IMR-90 (cell line): ENCODE measurements at regions of chr14 and their contacts with region 1.

Region 1: DNA sequence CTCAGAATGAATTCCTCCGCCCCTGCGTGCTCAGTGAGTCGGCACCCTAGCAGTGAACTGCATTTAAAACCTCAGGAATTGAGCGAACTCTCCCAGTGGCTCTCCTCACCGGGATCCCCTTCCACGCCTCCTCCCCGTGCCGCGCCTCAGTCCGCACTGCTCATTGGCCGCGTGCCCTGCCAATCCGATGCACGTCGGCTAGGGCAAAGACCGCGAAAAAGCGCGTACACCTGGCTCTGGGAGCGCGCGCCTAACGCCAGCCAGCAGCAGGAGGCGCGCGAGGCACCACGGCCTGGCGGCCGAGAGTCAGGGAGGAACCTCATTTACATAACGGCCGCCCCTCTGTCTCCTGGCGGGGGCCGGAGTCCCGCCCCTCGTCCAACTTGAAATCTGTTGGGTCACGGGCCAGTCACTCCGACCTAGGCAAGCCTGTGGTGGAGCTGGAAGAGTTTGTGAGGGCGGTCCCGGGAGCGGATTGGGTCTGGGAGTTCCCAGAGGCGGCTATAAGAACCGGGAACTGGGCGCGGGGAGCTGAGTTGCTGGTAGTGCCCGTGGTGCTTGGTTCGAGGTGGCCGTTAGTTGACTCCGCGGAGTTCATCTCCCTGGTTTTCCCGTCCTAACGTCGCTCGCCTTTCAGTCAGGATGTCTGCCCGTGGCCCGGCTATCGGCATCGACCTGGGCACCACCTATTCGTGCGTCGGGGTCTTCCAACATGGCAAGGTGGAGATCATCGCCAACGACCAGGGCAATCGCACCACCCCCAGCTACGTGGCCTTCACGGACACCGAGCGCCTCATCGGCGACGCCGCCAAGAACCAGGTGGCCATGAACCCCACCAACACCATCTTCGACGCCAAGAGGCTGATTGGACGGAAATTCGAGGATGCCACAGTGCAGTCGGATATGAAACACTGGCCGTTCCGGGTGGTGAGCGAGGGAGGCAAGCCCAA is at the start of gene HSPA2:
- DNase-seq: peak; percentile 99
- ATAC-seq: peak; percentile 95
- H3K4me3 ChIP-seq: peak within 1 kb of the TSS; percentile 67
- H3K27ac ChIP-seq: peak within 1 kb of the TSS; percentile 40
- H3K4me1 ChIP-seq: no peaks in the 10 kb centered on the region; the same call in 1 of the 2 replicates
- H3K27me3 ChIP-seq: no peaks in the 10 kb centered on the region
- CTCF ChIP-seq: peak; percentile 97
- POLR2A ChIP-seq: peak; percentile 98
- RAD21 ChIP-seq: peak; percentile 78
- total RNA-seq, gene HSPA2: 18.9 and 19.7 TPM in 2 replicates

Region 2: DNA sequence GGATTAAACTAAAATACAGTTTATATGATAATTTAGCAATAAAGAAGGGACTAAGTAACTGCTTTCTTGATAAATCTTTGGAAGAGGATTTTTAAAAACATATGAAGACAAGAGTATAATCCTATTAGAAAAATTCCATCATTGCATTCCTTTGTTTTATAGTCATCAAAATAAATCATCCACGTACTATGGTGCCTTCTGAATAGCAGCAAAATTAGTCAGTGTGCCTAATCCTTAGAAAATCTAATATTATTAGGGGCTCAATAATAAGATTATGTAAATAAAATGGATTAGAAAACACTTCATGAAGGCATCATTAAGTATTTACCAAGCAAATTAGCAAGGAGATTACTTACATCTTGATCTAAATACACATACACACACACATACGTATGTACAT is 1597.3 kb before region 1 on chr14:
- CTCF ChIA-PET with region 1: no interaction called
- POLR2A ChIA-PET with region 1: no interaction called
- dilution Hi-C with region 1: no loop called
- in situ Hi-C with region 1: no loop called
- intact Hi-C with region 1: no loop called
- DNase-seq: peak; percentile 49
- ATAC-seq: peak; percentile 77
- H3K4me3 ChIP-seq: no peak overlapping the region
- H3K27ac ChIP-seq: no peak overlapping the region
- H3K4me1 ChIP-seq: no peaks in the 10 kb centered on the region
- H3K27me3 ChIP-seq: no peaks in the 10 kb centered on the region
- CTCF ChIP-seq: no peak
- POLR2A ChIP-seq: no peak
- RAD21 ChIP-seq: no peak

Region 3: GRCh38 chr14:64612021-64612380 is 71.5 kb after region 1 on chr14:
- CTCF ChIA-PET with region 1: interaction called, 3 read pairs
- POLR2A ChIA-PET with region 1: no interaction called
- dilution Hi-C with region 1: no loop called
- in situ Hi-C with region 1: no loop called
- intact Hi-C with region 1: loop called (anchors 5 kb)
- DNase-seq: peak; percentile 85
- ATAC-seq: peak; percentile 90
- H3K4me3 ChIP-seq: no peak overlapping the region
- H3K27ac ChIP-seq: peak overlapping the region; percentile 98; the same call in 1 of the 2 replicates
- H3K4me1 ChIP-seq: peaks cover 24% of the 10 kb centered on the region
- H3K27me3 ChIP-seq: no peaks in the 10 kb centered on the region
- CTCF ChIP-seq: no peak
- POLR2A ChIP-seq: no peak
- RAD21 ChIP-seq: no peak

Region 4: DNA sequence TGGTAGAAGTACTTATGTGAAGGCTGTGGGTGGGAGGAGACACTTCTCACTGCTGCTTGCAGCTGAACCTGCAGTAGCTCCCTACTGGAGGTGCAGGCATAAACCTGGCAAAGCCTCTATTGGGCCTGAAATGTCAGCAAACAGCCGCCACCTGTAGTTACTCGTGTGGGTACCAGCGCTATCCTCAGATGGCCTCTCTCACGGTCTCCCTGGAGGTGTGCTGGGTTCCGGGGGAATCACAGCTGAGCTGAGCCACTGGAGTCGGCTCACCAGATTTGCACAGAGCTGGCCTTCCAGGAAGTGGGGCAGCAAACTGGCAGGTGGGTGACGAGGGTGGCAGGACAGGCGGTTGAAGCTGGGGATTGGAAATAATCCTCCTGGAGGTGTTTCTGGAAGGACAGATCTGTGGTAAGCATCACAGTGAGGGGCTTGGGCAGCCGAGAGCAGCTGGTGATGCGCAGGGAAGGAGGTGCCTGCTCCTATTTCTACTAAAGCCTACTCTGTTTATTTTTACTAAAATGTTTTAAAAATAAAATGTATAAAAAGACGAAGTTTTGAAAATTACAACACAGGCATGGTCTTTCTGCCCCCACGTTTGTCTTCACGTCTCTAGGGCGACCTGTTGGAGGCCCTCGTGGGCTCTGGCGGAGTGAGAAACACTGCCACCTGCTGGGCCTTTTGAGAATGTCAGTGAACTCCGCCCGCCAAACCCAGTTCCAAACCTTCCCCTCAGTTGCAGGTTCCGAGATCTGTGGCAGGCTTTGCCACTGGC is 95.9 kb after region 1 on chr14:
- CTCF ChIA-PET with region 1: interaction called, 13 read pairs
- POLR2A ChIA-PET with region 1: no interaction called
- dilution Hi-C with region 1: no loop called
- in situ Hi-C with region 1: loop called (anchors 5 kb)
- intact Hi-C with region 1: loop called (anchors 1 kb)
- DNase-seq: peak; percentile 67
- ATAC-seq: peak; percentile 89
- H3K4me3 ChIP-seq: no peak overlapping the region
- H3K27ac ChIP-seq: peak overlapping the region; percentile 48
- H3K4me1 ChIP-seq: peaks cover 12% of the 10 kb centered on the region
- H3K27me3 ChIP-seq: no peaks in the 10 kb centered on the region
- CTCF ChIP-seq: peak; percentile 86
- POLR2A ChIP-seq: no peak
- RAD21 ChIP-seq: peak; percentile 84

Region 5: DNA sequence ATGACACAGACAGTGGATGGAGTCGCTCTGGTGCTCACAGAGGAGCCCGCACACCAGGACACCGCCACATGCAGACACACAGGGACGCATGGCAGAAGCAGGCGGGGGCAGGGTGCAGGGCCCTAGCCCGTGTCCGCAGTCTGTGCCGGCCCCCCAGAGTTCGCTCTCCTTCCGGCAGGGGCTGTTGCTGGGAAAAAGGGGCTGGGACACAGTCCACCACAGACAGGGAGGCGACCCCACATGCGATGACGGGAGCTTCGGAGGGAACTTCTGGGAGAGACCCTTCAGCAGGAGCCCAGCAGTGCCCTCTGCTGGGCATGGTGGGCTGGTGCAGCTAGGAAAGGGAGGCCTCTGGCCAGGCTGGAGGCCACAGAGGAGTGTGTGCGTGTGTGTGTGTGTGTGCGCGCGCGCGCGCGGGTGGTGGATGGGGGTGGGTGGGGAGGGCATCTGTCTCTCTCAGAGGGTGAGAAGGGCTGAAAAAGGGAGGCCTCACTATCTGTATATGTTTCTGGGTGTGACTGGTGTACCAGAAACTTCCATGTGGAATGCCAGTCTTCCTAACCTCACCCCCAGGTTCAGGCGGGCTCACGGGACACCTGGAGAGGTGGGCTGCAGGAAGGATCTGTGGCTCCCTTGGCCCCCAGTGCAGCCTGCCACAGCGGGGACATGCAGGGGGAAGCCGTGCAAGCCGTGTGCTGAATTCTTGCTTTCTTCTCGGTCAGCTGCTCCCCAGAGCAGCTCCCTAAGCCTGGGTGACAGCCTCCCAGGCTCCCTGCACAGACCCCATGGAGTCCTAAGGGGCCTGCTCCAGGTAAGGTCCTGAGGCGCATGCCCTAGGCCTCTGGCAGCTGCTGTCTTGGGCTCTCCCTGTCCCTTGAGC is 224.4 kb after region 1 on chr14:
- CTCF ChIA-PET with region 1: no interaction called
- POLR2A ChIA-PET with region 1: no interaction called
- dilution Hi-C with region 1: no loop called
- in situ Hi-C with region 1: loop called (anchors 10 kb)
- intact Hi-C with region 1: loop called (anchors 1 kb)
- DNase-seq: peak; percentile 74
- ATAC-seq: peak; percentile 84
- H3K4me3 ChIP-seq: no peak overlapping the region
- H3K27ac ChIP-seq: no peak overlapping the region
- H3K4me1 ChIP-seq: peaks cover 30% of the 10 kb centered on the region
- H3K27me3 ChIP-seq: peaks cover 12% of the 10 kb centered on the region
- CTCF ChIP-seq: peak; percentile 88
- POLR2A ChIP-seq: no peak
- RAD21 ChIP-seq: peak; percentile 89

Region 6: DNA sequence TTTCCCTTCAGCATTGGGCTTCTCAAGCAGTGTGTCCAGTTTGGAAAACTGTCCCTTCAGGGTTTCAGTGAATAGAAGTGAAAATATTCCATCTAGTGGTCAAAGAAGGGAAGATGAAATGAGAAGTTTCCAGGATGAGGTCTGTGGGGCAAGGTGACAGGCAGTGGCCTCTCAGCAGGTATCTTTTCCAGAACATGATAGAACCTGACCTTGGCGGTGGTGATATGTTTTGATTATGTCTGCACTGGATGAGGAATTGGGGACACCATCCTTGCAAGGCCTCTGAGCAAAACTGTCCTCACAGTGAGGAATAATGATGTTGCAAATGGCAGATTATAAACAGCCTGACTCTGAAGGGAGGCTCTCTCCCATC is 397.3 kb after region 1 on chr14:
- CTCF ChIA-PET with region 1: no interaction called
- POLR2A ChIA-PET with region 1: no interaction called
- dilution Hi-C with region 1: no loop called
- in situ Hi-C with region 1: no loop called
- intact Hi-C with region 1: no loop called
- DNase-seq: peak; percentile 15
- ATAC-seq: peak; percentile 67
- H3K4me3 ChIP-seq: no peak overlapping the region
- H3K27ac ChIP-seq: no peak overlapping the region
- H3K4me1 ChIP-seq: no peaks in the 10 kb centered on the region
- H3K27me3 ChIP-seq: no peaks in the 10 kb centered on the region
- CTCF ChIP-seq: peak; percentile 26; the same call in 1 of the 2 replicates
- POLR2A ChIP-seq: no peak
- RAD21 ChIP-seq: peak; percentile 18; the same call in 1 of the 2 replicates

Region 7: DNA sequence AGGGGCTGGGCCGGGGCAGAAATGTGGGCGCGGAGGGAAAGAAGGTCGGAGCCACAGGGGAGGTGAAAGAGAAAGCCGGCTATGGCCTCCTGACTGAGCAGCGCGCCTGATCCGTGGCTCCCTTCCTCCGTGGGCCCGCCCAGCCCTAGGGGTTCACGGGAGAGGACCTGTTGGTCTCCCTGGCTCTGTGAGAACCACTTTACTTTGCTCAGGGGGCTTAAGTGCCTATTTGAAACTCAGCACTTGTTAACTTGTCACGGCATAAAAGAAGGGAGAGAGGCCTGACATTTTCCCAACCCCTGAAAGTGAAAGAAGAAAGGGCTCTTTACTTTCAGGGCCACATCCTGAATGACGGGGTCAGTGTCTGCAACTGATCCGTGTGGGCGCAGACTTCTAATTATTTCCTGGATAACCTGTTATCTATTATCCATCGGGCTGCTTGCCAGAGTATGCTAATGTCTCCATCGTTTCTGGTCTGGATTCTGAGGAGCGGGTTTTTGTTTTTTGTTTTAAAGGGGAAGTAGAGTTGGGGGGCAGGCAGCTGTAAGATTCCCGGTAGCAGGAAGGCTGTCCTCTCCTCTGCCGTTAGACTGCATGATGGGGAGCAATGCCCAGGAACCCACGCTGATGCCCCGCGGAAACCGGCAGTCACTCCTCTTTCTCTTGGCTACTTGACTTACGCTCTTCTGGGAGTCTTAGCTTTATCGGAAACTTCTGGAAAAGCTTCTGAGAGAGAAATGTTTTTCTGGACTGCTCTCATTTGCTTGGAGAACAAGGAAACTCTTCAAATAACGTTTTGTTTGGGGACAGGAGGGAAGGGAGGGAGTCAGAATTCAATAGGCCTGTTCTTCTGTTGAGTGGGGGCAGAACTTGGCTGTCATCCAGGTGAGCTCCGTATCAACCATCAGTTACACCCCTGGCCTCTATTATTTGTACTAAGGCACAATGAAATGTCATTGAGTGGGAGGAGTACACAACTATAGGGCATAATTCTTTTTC is 689.6 kb after region 1 on chr14:
- CTCF ChIA-PET with region 1: no interaction called
- POLR2A ChIA-PET with region 1: no interaction called
- dilution Hi-C with region 1: no loop called
- in situ Hi-C with region 1: no loop called
- intact Hi-C with region 1: no loop called
- DNase-seq: no peak
- ATAC-seq: peak; percentile 67
- H3K4me3 ChIP-seq: no peak overlapping the region
- H3K27ac ChIP-seq: peak overlapping the region; percentile 65
- H3K4me1 ChIP-seq: peaks cover 10% of the 10 kb centered on the region
- H3K27me3 ChIP-seq: no peaks in the 10 kb centered on the region
- CTCF ChIP-seq: no peak
- POLR2A ChIP-seq: no peak
- RAD21 ChIP-seq: no peak